ENCODE measurements at regions of chr1 and their contacts with region 1.

Region 1: GRCh38 chr1:112674439-112674985 is at the start of gene MOV10:
- DNase-seq: peak; percentile 75
- ATAC-seq: peak; percentile 77
- H3K4me3 Mint-ChIP-seq: peak within 1 kb of the TSS; percentile 95
- H3K27ac Mint-ChIP-seq: peak within 1 kb of the TSS; percentile 97
- H3K4me1 Mint-ChIP-seq: peaks cover 47% of the 10 kb centered on the region
- H3K27me3 Mint-ChIP-seq: no peaks in the 10 kb centered on the region
- total RNA-seq, gene MOV10: 120 TPM

Region 2: GRCh38 chr1:112619520-112620376 is 54.8 kb before region 1 on chr1 and contains the start of gene CAPZA1:
- CTCF ChIA-PET with region 1: interaction called, 5 read pairs
- POLR2A ChIA-PET with region 1: interaction called, 46 read pairs
- DNase-seq: peak; percentile 95
- ATAC-seq: peak; percentile 80
- H3K4me3 Mint-ChIP-seq: peak within 1 kb of the TSS; percentile 100
- H3K27ac Mint-ChIP-seq: peak within 1 kb of the TSS; percentile 100
- H3K4me1 Mint-ChIP-seq: peaks cover 36% of the 10 kb centered on the region
- H3K27me3 Mint-ChIP-seq: no peaks in the 10 kb centered on the region
- total RNA-seq, gene CAPZA1: 279 to 280 TPM

Region 3: GRCh38 chr1:112637254-112638116 is 37.0 kb before region 1 on chr1:
- CTCF ChIA-PET with region 1: interaction called, 5 read pairs
- POLR2A ChIA-PET with region 1: interaction called, 13 read pairs
- DNase-seq: no peak
- ATAC-seq: no peak
- H3K4me3 Mint-ChIP-seq: no peak overlapping the region
- H3K27ac Mint-ChIP-seq: no peak overlapping the region
- H3K4me1 Mint-ChIP-seq: peaks cover 42% of the 10 kb centered on the region
- H3K27me3 Mint-ChIP-seq: no peaks in the 10 kb centered on the region

Region 4: DNA sequence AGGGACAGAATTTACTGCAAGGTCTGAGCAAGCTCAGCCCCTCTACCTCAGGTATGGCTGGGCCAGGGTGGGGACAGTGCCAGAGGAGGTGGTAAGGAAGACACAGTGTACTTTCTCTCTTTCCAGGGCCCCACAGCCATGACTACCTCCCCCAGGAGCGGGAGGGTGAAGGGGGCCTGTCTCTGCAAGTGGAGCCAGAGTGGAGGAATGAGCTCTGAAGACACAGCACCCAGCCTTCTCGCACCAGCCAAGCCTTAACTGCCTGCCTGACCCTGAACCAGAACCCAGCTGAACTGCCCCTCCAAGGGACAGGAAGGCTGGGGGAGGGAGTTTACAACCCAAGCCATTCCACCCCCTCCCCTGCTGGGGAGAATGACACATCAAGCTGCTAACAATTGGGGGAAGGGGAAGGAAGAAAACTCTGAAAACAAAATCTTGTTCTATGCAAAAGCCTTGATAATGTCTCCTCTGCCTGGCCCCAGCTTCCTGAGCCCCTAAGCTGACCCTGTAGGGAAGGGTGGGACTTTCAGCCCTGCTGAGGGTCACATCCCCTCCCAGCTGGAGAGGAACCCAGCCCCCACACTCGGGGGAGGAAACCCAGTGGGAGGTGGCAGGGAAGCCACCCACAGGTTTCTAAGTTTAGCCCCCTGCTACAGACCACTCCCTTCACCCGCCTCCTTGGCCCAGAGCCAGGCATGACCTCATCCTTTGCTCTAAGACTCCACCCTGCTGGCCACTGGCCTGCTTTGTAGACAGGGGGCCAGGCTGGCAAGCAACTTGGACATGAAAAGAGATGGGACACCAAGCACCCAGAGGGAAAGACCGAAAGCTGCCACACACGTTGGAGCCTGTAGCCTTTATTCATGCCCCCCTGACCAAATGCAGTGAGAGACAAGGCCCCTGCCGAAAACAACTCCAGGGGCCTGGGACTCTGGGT is 26.0 kb after region 1 on chr1:
- CTCF ChIA-PET with region 1: interaction called, 12 read pairs
- POLR2A ChIA-PET with region 1: interaction called, 21 read pairs
- DNase-seq: peak; percentile 81
- ATAC-seq: peak; percentile 41
- H3K4me3 Mint-ChIP-seq: no peak overlapping the region
- H3K27ac Mint-ChIP-seq: peak overlapping the region; percentile 91
- H3K4me1 Mint-ChIP-seq: peaks cover 62% of the 10 kb centered on the region
- H3K27me3 Mint-ChIP-seq: no peaks in the 10 kb centered on the region

Region 5: DNA sequence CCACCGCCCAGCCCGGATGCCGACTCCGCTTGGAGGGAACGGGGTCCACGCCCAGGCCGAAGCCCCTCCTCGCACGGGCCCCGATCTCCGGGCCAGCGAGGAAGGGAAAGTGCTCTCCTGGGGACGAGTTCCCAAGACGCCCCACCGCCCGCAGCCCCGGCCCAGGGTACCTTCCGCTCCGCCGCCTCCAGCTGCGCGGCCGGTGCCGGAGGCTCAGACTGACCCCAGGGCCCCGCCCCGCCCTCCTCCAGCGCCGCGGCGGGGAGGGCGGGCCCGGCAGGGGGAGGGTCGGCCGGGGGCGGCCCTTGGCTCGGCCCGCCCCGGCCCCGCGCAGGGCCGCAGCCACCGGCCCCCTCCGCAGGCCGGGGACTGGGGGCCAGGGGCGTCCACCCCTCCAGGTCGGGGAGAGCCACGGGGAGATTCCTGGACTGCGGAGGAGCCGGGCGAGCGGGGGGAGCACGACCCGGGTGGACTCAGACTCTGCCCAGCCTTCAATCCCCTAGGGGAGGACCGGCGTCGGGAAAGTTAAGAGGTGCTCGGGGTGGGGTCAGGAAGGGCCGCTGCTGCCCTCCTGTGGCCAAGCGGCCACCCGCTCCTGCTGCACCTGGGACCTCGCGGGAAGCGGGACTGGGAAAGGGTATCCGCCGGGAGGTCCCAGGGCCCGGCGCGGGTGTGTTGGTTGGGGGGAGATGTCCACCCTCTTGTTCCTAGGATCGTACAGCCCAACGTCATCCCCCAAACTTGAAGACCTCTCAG is 32.6 kb after region 1 on chr1 and contains the start of gene RHOC:
- CTCF ChIA-PET with region 1: interaction called, 17 read pairs
- POLR2A ChIA-PET with region 1: interaction called, 21 read pairs
- DNase-seq: peak; percentile 72
- ATAC-seq: peak; percentile 75
- H3K4me3 Mint-ChIP-seq: peak within 1 kb of the TSS; percentile 79
- H3K27ac Mint-ChIP-seq: peak within 1 kb of the TSS; percentile 92
- H3K4me1 Mint-ChIP-seq: peaks cover 44% of the 10 kb centered on the region
- H3K27me3 Mint-ChIP-seq: peaks cover 25% of the 10 kb centered on the region
- total RNA-seq, gene RHOC: 85.6 to 93.8 TPM

Region 6: DNA sequence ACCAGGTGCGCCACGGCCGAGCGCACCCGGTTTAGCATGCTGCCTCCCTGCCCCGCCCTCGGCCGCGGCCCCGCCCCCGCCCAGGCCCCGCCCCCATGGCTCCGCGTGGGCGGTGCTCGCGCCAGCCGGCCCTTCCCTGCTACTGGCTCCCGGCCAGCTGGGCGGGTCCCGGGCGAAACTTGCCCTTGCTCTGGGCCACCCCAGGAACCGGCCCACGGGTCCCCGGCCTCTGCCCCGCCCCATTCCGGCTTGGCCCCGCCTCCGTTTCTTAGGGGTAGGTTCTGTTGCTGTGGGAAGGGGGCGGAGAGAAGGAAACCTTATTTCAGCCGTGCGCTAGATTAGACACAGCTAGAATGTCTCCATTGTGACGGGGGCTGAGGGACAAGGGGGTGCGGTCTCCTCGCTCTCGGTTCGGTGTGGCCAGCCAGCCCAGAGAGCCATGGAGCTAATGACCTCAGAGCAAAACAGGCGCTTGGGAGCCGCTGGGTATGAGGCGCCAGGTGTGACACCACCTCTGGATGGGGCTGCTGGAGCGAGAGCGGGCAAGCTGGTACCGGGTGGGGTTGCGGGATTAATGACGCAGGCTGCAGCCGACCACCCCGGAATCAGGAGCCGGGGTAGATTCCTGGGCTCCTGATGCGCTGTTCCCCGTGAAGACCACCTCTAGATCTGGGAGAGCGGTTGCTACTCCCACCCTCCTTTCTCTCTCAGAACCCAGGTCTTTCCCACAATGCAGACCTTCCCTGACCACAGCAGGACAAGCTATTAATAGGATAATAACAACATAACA is 40.9 kb after region 1 on chr1 and contains the start of gene PPM1J:
- CTCF ChIA-PET with region 1: interaction called, 19 read pairs
- POLR2A ChIA-PET with region 1: interaction called, 10 read pairs
- DNase-seq: peak; percentile 98
- ATAC-seq: peak; percentile 93
- H3K4me3 Mint-ChIP-seq: peak within 1 kb of the TSS; percentile 81
- H3K27ac Mint-ChIP-seq: peak within 1 kb of the TSS; percentile 64
- H3K4me1 Mint-ChIP-seq: peaks cover 28% of the 10 kb centered on the region
- H3K27me3 Mint-ChIP-seq: peaks cover 38% of the 10 kb centered on the region
- total RNA-seq, gene PPM1J: not detected

Region 7: DNA sequence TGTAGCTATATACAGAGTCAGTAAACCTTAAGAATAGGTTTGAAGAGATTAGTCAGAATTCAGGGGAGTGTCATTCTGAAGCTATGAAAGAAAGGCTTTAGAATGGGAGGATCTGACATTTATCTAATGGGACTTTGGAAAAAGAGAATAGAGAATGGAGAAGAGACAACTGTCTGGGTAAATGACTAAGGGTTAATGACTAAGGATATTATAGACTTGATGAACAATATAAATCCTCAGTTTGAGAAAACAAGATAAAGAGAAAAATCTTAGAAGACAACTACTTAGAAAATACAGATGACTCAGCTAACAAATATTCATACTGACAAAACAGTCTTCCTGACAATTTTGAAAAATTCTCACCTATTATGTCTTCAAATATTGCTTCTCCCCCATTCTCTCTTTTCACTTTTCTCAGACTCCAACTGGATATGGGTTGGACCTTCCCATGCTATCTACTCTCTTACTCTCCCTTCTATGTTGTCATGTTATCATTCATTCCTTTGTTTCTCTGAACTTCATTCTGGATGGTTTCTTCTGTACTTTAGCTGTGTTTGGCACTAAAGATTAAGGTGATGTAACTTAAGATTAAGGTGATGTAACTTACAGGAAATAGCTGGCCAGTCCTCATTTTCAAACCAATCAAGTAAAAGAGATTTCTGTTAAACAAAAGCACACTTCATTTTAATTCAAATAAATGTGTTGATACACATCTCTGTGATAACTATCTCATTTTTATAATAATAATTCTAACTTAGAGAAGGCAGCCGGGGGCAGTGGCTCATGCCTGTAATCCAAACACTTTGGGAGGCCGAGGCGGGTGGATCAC is 261.2 kb after region 1 on chr1:
- CTCF ChIA-PET with region 1: no interaction called
- POLR2A ChIA-PET with region 1: no interaction called
- DNase-seq: no peak
- ATAC-seq: no peak
- H3K4me3 Mint-ChIP-seq: no peak overlapping the region
- H3K27ac Mint-ChIP-seq: peak overlapping the region; percentile 83
- H3K4me1 Mint-ChIP-seq: peaks cover 41% of the 10 kb centered on the region
- H3K27me3 Mint-ChIP-seq: no peaks in the 10 kb centered on the region

Measured in activated CD8-positive, alpha-beta T cell treated with anti-CD3 and anti-CD28 coated beads, Interleukin-2, amount 10 ng/mL, durations not matched to agents 7 days and 5 days (primary cell).